Colonic mucosa (tissue), 4 donors: ENCODE measurements at regions of chr11 and their contacts with region 1.

Region 1: DNA sequence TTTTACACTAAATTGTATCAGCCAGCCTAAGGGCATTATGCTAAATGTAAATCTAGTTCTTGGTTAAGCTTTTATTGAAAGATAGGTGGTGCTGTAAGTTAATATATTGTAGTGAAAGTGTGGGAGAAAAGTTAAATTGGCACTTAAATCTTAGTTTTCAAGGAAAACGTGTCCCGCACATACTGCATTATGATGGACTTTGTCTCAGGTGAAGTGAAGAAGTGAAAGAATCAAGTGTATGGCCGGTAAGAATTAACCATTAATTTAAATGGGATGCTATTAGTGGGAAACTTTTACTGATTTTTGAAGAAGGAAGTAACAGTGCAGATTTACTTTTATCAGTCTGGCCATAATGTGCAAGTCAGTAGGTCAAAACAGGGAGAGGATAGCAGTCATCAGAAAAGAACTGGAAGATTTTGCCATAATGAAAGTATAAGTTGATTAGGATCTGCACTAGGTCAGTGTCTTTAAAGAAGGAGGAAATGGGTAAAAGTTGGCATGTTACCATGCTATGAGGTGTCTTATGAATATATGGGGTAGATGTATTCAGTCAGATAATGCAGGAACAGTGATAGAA is 81.6 kb downstream of the PDHX start:
- DNase-seq: no peak
- H3K4me3 ChIP-seq: no peak overlapping the region
- H3K27ac ChIP-seq: no peak overlapping the region
- H3K4me1 ChIP-seq: no peaks in the 10 kb centered on the region
- H3K27me3 ChIP-seq: no peaks in the 10 kb centered on the region
- CTCF ChIP-seq: peak; percentile 38

Region 2: GRCh38 chr11:35237860-35238715 is 240.0 kb after region 1 on chr11:
- intact Hi-C with region 1: loop called (anchors 10 kb)
- DNase-seq: peak; percentile 61
- H3K4me3 ChIP-seq: no peak overlapping the region
- H3K27ac ChIP-seq: no peak overlapping the region
- H3K4me1 ChIP-seq: no peaks in the 10 kb centered on the region
- H3K27me3 ChIP-seq: no peaks in the 10 kb centered on the region
- CTCF ChIP-seq: peak; percentile 71

Region 3: GRCh38 chr11:35305670-35306382 is 307.8 kb after region 1 on chr11:
- intact Hi-C with region 1: loop called (anchors 10 kb)
- DNase-seq: peak; percentile 45
- H3K4me3 ChIP-seq: no peak overlapping the region
- H3K27ac ChIP-seq: no peak overlapping the region
- H3K4me1 ChIP-seq: no peaks in the 10 kb centered on the region
- H3K27me3 ChIP-seq: no peaks in the 10 kb centered on the region
- CTCF ChIP-seq: peak; percentile 48

Region 4: GRCh38 chr11:35391922-35392813 is 394.1 kb after region 1 on chr11:
- intact Hi-C with region 1: loop called (anchors 5 kb)
- DNase-seq: peak; percentile 89
- H3K4me3 ChIP-seq: no peak overlapping the region
- H3K27ac ChIP-seq: no peak overlapping the region
- H3K4me1 ChIP-seq: peaks cover 11% of the 10 kb centered on the region
- H3K27me3 ChIP-seq: no peaks in the 10 kb centered on the region
- CTCF ChIP-seq: peak; percentile 81